ENCODE measurements at regions of chr7 and their contacts with region 1.

Region 1: DNA sequence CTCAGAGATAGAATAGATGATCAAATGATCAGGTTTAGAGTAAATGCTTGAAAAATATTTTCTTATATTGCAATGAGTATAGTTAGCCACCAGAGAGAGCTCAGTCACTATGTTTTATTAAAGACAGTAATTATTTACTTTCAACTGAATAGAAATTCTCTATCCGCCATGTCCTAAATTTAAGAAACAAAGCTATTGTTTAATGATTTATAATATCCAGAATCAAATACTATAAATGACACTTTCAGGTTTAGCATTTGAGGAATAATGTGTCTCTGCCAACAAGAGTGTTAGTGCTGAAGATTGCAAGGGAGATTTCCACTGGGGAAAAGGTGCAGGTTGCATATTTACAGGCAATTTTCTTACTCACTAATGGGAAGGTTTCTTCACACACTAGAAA is 184.7 kb downstream of the DGKB start:
- DNase-seq: no peak
- ATAC-seq: no peak; the same call in 1 of the 2 replicates
- H3K4me3 ChIP-seq: no peak overlapping the region
- H3K27ac ChIP-seq: no peak overlapping the region
- H3K4me1 ChIP-seq: no peaks in the 10 kb centered on the region
- H3K27me3 ChIP-seq: no peaks in the 10 kb centered on the region
- CTCF ChIP-seq: peak; percentile 60; the same call in 1 of the 2 replicates

Region 2: DNA sequence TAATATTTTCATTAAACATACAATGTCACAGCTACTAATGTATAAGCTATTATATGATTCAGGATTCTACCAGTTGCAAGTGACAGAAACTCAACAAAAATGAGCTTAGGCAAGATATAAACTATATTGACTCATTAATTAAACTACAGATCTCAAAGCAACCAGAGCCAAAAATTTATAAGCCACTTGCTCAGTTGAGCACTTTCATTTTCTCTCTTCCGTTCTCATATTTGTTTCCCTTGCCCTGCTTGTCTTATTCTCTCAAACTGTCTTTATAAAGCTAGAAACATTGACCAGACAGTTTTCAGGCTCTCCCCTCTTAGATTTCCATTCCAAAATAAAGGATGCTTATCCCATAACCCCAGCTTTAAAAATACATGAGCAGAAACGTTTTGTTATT is 245.0 kb after region 1 on chr7:
- CTCF ChIA-PET with region 1: no interaction called
- POLR2A ChIA-PET with region 1: interaction called, 11 read pairs
- in situ Hi-C with region 1: no loop called
- intact Hi-C with region 1: no loop called
- DNase-seq: no peak
- ATAC-seq: no peak
- H3K4me3 ChIP-seq: no peak overlapping the region
- H3K27ac ChIP-seq: no peak overlapping the region
- H3K4me1 ChIP-seq: no peaks in the 10 kb centered on the region
- H3K27me3 ChIP-seq: no peaks in the 10 kb centered on the region
- CTCF ChIP-seq: no peak

Region 3: DNA sequence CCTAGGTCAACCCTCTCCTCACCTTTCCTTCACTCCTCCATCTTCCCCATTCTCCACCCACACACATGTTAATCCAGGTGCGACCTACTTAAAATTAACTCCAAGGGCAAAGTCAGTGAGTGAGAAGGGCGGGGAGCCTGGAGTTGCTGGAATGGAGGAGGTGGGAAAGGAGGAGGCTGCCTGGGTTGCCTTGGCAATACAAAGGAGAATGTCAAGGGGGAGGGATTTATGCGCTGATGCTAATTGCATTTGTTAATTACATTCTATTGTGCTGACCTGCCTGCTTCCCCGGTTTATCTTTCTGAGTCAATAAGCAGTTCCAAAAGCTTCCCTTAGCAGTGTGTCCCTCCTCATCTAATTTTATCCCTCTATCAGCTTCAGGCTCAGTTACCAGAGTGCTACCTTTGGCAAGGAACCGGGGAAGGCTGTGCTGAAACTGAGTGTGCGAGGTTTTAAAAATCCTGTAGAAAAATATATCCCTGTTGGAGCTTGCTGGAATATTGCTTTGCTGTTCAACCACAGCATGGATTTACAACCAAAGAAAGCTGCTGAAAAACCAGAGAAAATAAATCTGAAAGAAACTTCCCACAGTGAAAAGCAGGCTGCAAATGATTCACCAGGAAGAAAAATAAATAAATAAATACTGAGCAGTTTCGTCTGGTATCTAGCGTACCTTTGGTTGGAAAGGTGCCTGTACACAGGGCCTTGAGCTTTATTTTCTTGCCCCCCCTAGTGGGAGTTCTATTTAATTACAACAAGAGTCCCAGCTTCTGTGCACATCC is 297.9 kb after region 1 on chr7:
- CTCF ChIA-PET with region 1: interaction called, 12 read pairs
- POLR2A ChIA-PET with region 1: interaction called, 3 read pairs
- in situ Hi-C with region 1: no loop called
- intact Hi-C with region 1: loop called (anchors 2 kb)
- DNase-seq: peak; percentile 22
- ATAC-seq: peak; percentile 97
- H3K4me3 ChIP-seq: peak overlapping the region; percentile 1 to 7; a peak in 2 of 4 replicates
- H3K27ac ChIP-seq: no peak overlapping the region
- H3K4me1 ChIP-seq: no peaks in the 10 kb centered on the region
- H3K27me3 ChIP-seq: no peaks in the 10 kb centered on the region
- CTCF ChIP-seq: peak; percentile 79

Region 4: GRCh38 chr7:15305002-15305600 is 587.3 kb after region 1 on chr7:
- CTCF ChIA-PET with region 1: no interaction called
- POLR2A ChIA-PET with region 1: no interaction called
- in situ Hi-C with region 1: no loop called
- intact Hi-C with region 1: loop called (anchors 10 kb)
- DNase-seq: peak; percentile 12
- ATAC-seq: no peak
- H3K4me3 ChIP-seq: no peak overlapping the region
- H3K27ac ChIP-seq: no peak overlapping the region
- H3K4me1 ChIP-seq: no peaks in the 10 kb centered on the region
- H3K27me3 ChIP-seq: no peaks in the 10 kb centered on the region
- CTCF ChIP-seq: peak; percentile 78; the same call in 1 of the 2 replicates